ENCODE measurements at regions of chr10 and their contacts with region 1.

Region 1: DNA sequence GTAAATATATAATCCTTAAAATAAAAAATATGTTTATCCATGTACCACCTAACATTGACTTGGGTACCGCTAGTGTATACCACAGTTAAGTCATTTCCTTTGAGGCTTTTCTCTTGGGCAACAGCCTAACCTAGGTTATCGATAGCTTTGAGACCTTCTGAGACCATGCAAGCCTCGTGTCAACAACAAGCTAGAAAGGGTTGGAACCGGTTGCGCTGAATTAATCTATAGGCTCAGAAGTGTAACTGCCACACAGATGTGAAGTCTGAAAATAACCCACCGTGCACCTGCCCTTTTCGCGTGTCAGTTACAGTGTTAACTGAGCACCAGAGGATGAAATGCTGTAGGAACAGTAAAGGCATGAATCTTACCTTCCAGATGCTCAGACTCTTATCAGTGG is 59.8 kb downstream of the ARID5B start:
- DNase-seq: no peak
- ATAC-seq: no peak
- H3K4me3 ChIP-seq: no peak overlapping the region
- H3K27ac ChIP-seq: no peak overlapping the region
- H3K4me1 ChIP-seq: peaks cover 50% of the 10 kb centered on the region
- H3K27me3 ChIP-seq: no peaks in the 10 kb centered on the region
- CTCF ChIP-seq: no peak
- EP300 ChIP-seq: no peak
- POLR2A ChIP-seq: no peak
- RAD21 ChIP-seq: no peak

Region 2: DNA sequence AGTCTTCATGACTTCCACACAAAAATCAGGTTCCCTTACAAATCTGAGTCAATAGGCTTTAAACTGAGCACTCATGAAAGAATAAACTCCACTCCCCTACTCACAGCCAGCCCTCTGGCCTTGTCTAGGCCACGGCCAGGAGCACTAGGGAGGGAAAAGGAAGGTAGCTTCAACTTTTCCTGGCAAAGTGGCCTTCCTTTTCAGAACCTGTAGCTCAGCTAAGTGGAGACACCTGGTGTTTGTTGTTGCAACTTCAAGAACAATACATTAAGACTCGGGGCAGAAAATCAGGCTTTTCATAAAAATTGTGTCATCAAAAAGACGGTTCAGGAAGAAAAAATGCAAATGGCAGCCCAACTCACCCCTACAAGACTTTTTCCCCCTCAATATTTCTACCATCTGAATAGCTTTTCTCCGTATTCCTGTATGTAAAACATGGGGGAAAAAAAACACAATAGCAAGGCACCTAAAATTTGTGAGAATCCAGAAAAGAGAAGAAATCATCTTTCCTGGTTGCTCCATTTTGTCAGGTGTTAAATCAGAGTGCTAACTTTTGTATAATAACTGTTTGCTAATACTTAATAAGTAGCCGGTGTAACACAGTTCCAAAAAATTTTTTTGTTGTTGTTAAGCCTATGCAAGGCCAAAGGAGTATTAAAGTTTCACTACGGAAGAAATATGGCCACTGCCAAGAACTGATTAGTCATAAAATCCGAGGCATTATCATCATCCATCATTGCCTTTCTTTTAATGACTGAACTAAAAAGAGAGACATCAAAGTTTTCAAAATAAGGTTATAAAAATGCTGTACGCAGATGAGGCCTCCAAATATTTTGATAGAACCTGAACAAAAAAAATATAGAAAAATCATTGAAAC is 126.0 kb before region 1 on chr10:
- CTCF ChIA-PET with region 1: no interaction called
- POLR2A ChIA-PET with region 1: interaction called, 3 read pairs
- in situ Hi-C with region 1: no loop called
- intact Hi-C with region 1: loop called (anchors 10 kb)
- DNase-seq: peak; percentile 44
- ATAC-seq: peak; percentile 39; the same call in 1 of the 3 replicates
- H3K4me3 ChIP-seq: no peak overlapping the region
- H3K27ac ChIP-seq: no peak overlapping the region
- H3K4me1 ChIP-seq: peaks cover 66% of the 10 kb centered on the region
- H3K27me3 ChIP-seq: no peaks in the 10 kb centered on the region; a peak in 1 of 5 replicates
- CTCF ChIP-seq: peak; percentile 61
- EP300 ChIP-seq: no peak
- POLR2A ChIP-seq: no peak
- RAD21 ChIP-seq: peak; percentile 58

Region 3: DNA sequence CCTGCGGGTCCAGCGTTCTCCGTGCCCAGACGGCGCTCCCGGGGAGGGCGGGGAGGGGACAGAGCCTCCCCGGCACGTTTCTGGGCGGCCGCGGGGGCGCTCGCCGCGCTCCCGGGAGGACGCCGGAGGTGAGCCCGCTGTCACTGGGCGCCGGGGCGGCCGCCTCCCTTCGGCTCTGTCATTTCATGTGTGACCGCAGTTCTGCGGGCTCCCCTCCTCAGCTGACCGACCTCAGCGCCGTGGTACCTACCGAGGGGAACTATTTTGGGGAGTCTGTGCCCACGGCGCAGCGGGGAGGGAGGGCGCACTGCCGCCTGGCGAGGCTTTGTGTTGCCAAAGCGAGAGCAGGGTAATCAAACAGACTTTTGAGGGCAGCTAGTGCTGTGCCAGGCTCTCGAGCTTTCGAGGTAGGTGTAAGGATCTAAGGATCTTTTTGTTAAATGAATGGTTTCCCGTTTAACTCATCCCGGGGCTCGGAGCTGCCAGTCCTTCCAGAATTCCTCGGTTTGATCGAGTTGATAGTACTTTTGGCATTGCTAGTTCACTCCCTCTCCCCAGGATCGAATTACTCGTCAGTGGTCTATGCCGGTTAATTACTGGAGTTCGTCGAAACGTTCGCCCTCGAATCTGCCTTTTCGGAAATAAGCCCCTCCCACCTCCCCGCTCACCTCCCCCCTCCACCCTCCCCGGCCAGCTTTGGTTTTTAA is 57.9 kb before region 1 on chr10:
- CTCF ChIA-PET with region 1: no interaction called
- POLR2A ChIA-PET with region 1: interaction called, 8 read pairs
- in situ Hi-C with region 1: no loop called
- intact Hi-C with region 1: loop called (anchors 1 kb)
- DNase-seq: peak; percentile 38
- ATAC-seq: peak; percentile 89
- H3K4me3 ChIP-seq: peak overlapping the region; percentile 93 to 96 (median 94)
- H3K27ac ChIP-seq: peak overlapping the region; percentile 94
- H3K4me1 ChIP-seq: peaks cover 51% of the 10 kb centered on the region
- H3K27me3 ChIP-seq: no peaks in the 10 kb centered on the region; a peak in 1 of 5 replicates
- CTCF ChIP-seq: peak; percentile 36; the same call in 1 of the 2 replicates
- EP300 ChIP-seq: no peak
- POLR2A ChIP-seq: peak; percentile 39 to 47; a peak in 2 of 4 replicates
- RAD21 ChIP-seq: peak; percentile 45; the same call in 1 of the 2 replicates

Region 4: DNA sequence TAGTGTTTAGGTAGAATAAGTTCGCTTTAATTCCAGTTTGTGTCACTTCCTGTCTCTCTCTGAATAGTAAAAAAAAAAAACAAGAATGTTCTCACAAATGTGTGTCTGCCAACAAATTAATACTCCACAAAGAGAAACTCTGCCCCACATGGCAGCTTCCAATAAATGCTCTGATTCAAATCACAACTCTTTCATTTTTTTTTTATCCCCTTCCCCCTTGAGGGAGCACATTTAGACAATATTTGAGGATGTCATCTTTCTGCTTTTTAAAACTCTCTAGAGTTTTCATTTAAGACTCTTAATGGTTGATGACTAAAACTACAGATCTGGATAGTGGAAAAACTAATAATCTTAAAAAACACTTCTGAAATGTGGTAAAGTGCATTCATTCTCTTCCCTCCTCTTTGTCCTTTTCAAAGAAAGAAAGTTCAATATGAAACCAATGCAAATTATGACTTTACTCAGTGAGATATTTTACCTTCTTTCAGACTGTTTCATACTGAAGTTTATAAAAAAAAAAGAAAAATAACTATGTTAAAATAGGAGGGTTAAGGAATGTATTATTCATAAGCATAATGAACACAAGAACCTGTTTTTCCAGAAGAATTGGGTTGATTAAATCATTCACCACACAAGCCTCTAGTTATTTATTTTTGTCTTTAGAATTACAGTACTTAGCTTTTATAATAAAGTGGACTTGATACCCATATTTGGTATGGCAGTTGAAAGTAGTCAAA is 17.4 kb before region 1 on chr10:
- CTCF ChIA-PET with region 1: no interaction called
- POLR2A ChIA-PET with region 1: interaction called, 5 read pairs
- in situ Hi-C with region 1: no loop called
- intact Hi-C with region 1: loop called (anchors 2 kb)
- DNase-seq: no peak
- ATAC-seq: no peak
- H3K4me3 ChIP-seq: no peak overlapping the region
- H3K27ac ChIP-seq: no peak overlapping the region
- H3K4me1 ChIP-seq: peaks cover 15% of the 10 kb centered on the region; the same call in 1 of the 2 replicates
- H3K27me3 ChIP-seq: no peaks in the 10 kb centered on the region
- CTCF ChIP-seq: no peak
- EP300 ChIP-seq: no peak
- POLR2A ChIP-seq: no peak
- RAD21 ChIP-seq: no peak

Measured in HepG2 (cell line).